Heart right ventricle (tissue), 16 donors: ENCODE measurements at regions of chr2 and their contacts with region 1.

Region 1: GRCh38 chr2:96251721-96252292 is 14.0 kb downstream of the TMEM127 start:
- DNase-seq: peak; percentile 65 to 71
- ATAC-seq: peak; percentile 31 to 79 (median 74)
- H3K4me3 ChIP-seq: no peak overlapping the region
- H3K27ac ChIP-seq: peak overlapping the region in 9 of 10 donors; percentile 40 to 97 (median 71)
- H3K4me1 ChIP-seq: peaks cover 11 to 93% (median 74%) of the 10 kb centered on the region in 9 donors
- H3K27me3 ChIP-seq: no peaks in the 10 kb centered on the region
- CTCF ChIP-seq: no peak

Region 2: GRCh38 chr2:96213379-96213778 is 38.4 kb before region 1 on chr2:
- intact Hi-C with region 1: loop called in 1 of 10 experiments (anchors 5 kb)
- DNase-seq: no peak
- ATAC-seq: no peak
- H3K4me3 ChIP-seq: no peak overlapping the region
- H3K27ac ChIP-seq: no peak overlapping the region
- H3K4me1 ChIP-seq: peaks cover 0 to 16% (median 12%) of the 10 kb centered on the region in 9 donors
- H3K27me3 ChIP-seq: no peaks in the 10 kb centered on the region
- CTCF ChIP-seq: no peak

Region 3: GRCh38 chr2:96301865-96302264 is 50.1 kb after region 1 on chr2:
- intact Hi-C with region 1: no loop called
- DNase-seq: no peak
- ATAC-seq: no peak
- H3K4me3 ChIP-seq: no peak overlapping the region
- H3K27ac ChIP-seq: no peak overlapping the region
- H3K4me1 ChIP-seq: peaks cover 6 to 40% (median 24%) of the 10 kb centered on the region in 9 donors
- H3K27me3 ChIP-seq: no peaks in the 10 kb centered on the region
- CTCF ChIP-seq: no peak